Activated CD4-positive, alpha-beta T cell treated with anti-CD3 and anti-CD28 coated beads for 36 hours (primary cell): ENCODE measurements at regions of chr19 and their contacts with region 1.

Region 1: DNA sequence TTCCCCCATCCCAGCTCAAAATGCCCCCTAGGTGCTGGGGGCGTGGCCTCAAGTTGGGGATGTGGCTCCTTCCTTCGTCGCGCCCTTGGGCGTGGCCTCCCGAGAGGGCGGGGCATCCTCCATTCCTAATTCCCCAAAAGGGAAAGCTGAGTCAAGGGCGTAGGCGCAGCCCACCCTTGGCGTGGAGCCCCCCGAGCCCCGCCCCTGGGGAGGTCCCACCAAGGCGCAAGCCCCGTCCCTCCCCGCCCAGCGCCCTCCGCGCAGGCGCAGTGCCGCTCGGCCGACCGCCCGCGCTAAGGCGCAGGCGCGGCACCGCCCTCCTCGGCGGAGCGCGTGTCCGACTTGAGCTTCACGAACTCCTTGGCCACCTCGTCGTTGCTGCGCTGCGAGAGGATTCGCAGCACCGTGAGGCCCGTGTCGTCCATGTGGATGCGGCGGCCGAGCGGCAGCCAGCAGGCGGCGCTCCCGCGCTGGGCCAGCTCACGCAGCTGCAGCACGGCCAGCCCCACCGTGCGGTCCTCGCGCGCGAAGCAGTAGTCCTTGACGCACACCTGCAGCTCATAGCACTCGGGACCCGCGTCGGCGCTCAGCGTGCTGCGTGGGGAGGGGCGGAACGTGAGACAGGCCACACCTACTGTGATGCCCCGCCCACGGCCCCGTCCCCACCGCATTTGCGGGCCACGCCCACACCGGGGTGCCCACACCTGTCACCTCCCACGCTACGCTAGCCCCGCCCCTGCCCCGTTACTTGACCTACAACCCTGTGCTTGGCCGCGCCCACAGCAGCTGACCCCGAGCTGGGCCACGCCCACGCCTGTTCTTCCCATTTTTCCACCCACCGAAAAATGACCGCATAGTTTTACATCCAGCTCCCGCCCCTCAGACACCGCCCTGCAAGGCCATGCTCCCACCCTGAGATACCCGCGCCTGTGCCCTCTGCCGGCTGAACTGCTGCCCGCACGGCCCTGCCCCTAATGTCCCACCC is 50.6 kb downstream of the COLGALT1 start:
- DNase-seq: peak; percentile 90
- ATAC-seq: peak; percentile 89
- H3K4me3 Mint-ChIP-seq: peak overlapping the region; percentile 65
- H3K27ac Mint-ChIP-seq: no peak overlapping the region
- H3K4me1 Mint-ChIP-seq: peaks cover 8% of the 10 kb centered on the region
- H3K27me3 Mint-ChIP-seq: peaks cover 29% of the 10 kb centered on the region

Region 2: DNA sequence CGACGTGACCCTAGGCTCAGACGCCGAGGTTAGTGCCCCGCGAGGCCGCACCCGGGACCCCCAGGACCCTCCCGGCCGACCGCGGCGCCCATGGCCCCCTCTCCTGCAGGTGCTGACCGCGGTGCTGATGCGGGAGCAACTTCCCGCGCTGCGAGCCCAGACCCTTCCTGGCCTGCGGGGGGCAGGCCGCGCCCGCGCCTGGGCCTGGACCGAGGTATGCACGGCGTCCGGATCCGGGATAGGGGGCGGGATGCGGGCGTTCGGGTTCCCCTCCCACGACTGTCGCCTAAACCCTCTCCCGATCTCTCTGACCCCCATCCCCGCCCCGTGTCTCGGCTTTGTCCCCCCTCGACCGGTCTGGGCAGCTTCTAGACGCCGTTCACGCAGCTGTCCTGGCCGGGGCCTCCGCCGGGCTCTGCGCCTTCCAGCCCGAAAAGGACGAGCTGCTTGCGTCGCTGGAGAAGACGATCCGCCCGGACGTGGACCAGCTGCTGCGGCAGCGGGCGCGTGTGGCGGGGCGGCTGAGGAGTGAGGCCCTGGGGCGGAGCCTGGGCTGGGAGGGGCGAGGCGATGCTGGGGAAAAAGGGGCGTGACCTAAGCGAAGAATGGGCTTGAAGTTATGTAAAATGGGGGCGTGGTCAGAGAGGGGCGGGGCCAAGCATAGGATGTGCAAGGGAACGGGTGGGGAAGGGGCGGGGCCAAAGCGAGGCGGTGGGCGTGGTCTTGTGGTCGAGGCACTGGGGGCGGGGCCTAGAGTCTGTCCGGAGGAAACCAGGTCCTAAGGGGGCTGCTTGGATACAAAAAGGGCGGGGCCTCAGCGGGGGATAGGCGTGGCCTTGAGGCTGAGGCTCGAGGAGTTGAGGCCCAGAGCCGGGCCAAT is 66.6 kb before region 1 on chr19:
- CTCF ChIA-PET with region 1: no interaction called
- POLR2A ChIA-PET with region 1: no interaction called
- intact Hi-C with region 1: loop called in 1 of 2 experiments (anchors 1 kb)
- DNase-seq: peak; percentile 99
- ATAC-seq: peak; percentile 94
- H3K4me3 Mint-ChIP-seq: peak overlapping the region; percentile 71
- H3K27ac Mint-ChIP-seq: peak overlapping the region; percentile 47
- H3K4me1 Mint-ChIP-seq: peaks cover 10% of the 10 kb centered on the region
- H3K27me3 Mint-ChIP-seq: peaks cover 6% of the 10 kb centered on the region

Region 3: DNA sequence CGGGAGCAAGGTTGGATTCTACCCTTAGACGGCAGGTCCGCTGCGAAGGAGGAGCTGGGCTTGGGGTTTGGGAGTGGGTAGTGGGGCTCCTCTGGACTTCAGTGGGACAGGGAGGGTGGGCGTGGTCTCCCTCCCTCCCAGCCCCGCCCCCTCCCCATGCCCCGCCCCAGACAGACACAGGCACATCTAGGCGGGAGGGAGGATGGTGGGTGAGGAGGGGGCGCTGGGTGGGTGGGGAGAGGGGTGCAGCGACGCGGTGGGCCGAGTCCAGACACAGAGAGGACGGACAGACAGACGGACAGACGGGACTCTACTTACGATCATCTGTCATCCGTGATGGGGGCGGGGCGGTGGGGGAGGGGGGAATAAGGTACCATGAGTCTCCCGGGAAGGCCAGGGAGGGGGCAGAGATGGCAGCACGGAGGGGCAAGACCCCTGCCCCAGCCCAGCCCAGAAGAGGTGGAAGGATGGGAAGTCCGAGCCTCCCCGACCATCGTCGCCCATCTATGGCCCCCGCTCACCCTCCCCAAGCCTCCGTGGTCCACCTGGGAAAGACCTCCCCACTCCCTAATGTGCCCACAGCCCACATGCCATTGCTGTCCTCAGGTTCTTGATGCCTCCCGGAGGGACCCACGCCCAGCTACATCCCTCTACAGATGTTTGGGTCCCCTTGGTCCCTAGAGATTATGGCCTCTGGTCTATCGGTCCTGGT is 17.3 kb after region 1 on chr19:
- CTCF ChIA-PET with region 1: interaction called, 10 read pairs
- POLR2A ChIA-PET with region 1: no interaction called
- intact Hi-C with region 1: no loop called
- DNase-seq: no peak
- ATAC-seq: no peak
- H3K4me3 Mint-ChIP-seq: no peak overlapping the region
- H3K27ac Mint-ChIP-seq: no peak overlapping the region
- H3K4me1 Mint-ChIP-seq: no peaks in the 10 kb centered on the region
- H3K27me3 Mint-ChIP-seq: peaks cover 13% of the 10 kb centered on the region

Region 4: GRCh38 chr19:17784201-17785008 is 178.4 kb after region 1 on chr19:
- CTCF ChIA-PET with region 1: interaction called, 3 read pairs
- POLR2A ChIA-PET with region 1: interaction called, 3 read pairs
- intact Hi-C with region 1: loop called in 1 of 2 experiments (anchors 5 kb)
- DNase-seq: peak; percentile 87
- ATAC-seq: peak; percentile 73
- H3K4me3 Mint-ChIP-seq: no peak overlapping the region
- H3K27ac Mint-ChIP-seq: no peak overlapping the region
- H3K4me1 Mint-ChIP-seq: peaks cover 6% of the 10 kb centered on the region
- H3K27me3 Mint-ChIP-seq: no peaks in the 10 kb centered on the region